IMR-90 (cell line): ENCODE measurements at regions of chr3 and their contacts with region 1.

Region 1: GRCh38 chr3:130699765-130700164 is 46.9 kb downstream of the PIK3R4 start:
- DNase-seq: peak; percentile 9
- ATAC-seq: no peak
- H3K4me3 ChIP-seq: no peak overlapping the region
- H3K27ac ChIP-seq: no peak overlapping the region
- H3K4me1 ChIP-seq: no peaks in the 10 kb centered on the region
- H3K27me3 ChIP-seq: no peaks in the 10 kb centered on the region
- CTCF ChIP-seq: peak; percentile 46
- POLR2A ChIP-seq: no peak
- RAD21 ChIP-seq: peak; percentile 38; the same call in 1 of the 2 replicates

Region 2: DNA sequence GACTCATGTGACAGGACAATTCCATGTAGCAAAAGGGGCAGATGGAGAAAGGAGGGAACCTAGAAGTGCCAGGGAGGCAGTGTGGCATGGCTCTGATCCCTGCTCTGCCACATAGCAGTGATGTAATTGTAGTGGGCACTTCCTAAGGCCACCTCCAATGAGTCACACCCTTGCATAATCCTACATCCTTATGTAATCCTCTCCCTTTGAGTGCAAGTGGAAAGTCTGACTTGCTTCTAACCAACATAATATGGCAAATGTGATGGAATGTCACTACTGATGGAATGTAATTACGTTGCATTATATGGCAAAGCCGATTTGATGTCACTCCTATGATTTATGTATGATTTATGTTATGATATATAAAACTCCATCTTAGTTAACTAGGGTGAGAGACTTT is 121.2 kb after region 1 on chr3:
- CTCF ChIA-PET with region 1: no interaction called
- POLR2A ChIA-PET with region 1: no interaction called
- dilution Hi-C with region 1: no loop called
- in situ Hi-C with region 1: loop called (anchors 25 kb)
- intact Hi-C with region 1: no loop called
- DNase-seq: peak; percentile 28
- ATAC-seq: no peak
- H3K4me3 ChIP-seq: no peak overlapping the region
- H3K27ac ChIP-seq: no peak overlapping the region
- H3K4me1 ChIP-seq: no peaks in the 10 kb centered on the region
- H3K27me3 ChIP-seq: no peaks in the 10 kb centered on the region
- CTCF ChIP-seq: no peak
- POLR2A ChIP-seq: no peak
- RAD21 ChIP-seq: no peak

Region 3: GRCh38 chr3:131036200-131036816 is 336.5 kb after region 1 on chr3:
- CTCF ChIA-PET with region 1: no interaction called
- POLR2A ChIA-PET with region 1: no interaction called
- dilution Hi-C with region 1: no loop called
- in situ Hi-C with region 1: no loop called
- intact Hi-C with region 1: no loop called
- DNase-seq: peak; percentile 88
- ATAC-seq: peak; percentile 94
- H3K4me3 ChIP-seq: no peak overlapping the region
- H3K27ac ChIP-seq: no peak overlapping the region
- H3K4me1 ChIP-seq: peaks cover 4% of the 10 kb centered on the region
- H3K27me3 ChIP-seq: no peaks in the 10 kb centered on the region
- CTCF ChIP-seq: no peak
- POLR2A ChIP-seq: no peak
- RAD21 ChIP-seq: no peak